ENCODE measurements at regions of chr17 and their contacts with region 1.

Region 1: DNA sequence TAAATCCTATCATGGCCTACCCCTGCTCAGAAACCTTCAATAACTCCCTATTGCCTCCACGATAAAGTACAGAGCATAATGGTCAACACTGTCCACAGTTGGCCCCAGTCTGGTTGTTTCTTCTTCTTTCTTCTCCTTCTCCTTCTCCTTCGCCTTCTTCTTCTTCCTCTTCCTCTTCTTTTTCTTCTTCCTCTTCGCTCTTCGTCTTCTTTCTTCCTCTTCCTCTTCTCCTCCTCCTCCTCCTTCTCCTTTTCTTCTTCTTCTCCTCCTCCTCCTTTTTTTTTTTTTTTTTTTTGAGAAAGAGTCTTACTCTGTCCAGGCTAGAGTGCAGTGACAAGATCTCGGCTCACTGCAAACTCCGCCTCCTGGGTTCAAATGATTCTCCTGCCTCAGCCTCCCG is 23.8 kb downstream of the MRM1 start:
- DNase-seq: no peak
- H3K27ac ChIP-seq: no peak overlapping the region
- CTCF ChIP-seq: no peak

Region 2: GRCh38 chr17:36545465-36546417 is 79.4 kb before region 1 on chr17:
- CTCF ChIA-PET with region 1: no interaction called
- POLR2A ChIA-PET with region 1: no interaction called
- DNase-seq: peak; percentile 97
- H3K27ac ChIP-seq: peak overlapping the region; percentile 98
- CTCF ChIP-seq: no peak

Region 3: GRCh38 chr17:36578671-36579070 is 46.5 kb before region 1 on chr17:
- CTCF ChIA-PET with region 1: no interaction called
- POLR2A ChIA-PET with region 1: no interaction called
- DNase-seq: no peak
- H3K27ac ChIP-seq: no peak overlapping the region
- CTCF ChIP-seq: no peak

Region 4: DNA sequence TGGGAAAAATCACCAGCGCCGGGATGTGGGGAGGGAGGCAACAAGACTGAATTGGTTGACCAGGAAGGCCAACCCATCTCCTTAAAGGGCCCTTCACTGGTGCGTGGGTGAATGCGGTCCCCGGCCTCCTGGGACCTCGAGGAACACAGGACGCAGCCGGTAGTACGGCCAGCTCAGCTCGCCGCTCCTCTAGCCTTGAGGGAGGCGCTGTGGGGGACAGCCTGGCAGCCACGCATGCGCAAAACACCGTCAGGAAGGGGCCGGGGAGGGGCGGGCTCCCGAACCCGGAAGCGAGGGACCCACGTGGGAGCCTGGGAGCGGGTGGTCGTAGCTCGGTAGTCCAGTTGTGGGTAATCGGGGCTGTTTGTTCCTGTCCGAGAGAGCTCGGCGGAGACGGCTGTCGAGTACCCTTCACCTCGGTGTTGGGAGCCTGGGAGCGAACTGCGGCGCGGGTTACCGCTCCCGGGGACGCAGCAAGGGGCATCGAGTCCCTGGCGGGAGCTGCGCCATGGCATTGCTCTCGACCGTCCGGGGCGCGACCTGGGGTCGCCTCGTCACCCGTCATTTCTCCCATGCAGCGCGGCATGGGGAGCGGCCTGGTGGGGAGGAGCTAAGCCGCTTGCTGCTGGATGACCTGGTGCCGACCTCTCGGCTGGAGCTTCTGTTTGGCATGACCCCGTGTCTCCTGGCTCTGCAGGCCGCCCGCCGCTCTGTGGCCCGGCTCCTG is 23.7 kb before region 1 on chr17 and contains the start of gene MRM1:
- CTCF ChIA-PET with region 1: interaction called, 15 read pairs
- POLR2A ChIA-PET with region 1: no interaction called
- DNase-seq: peak; percentile 93
- H3K27ac ChIP-seq: peak within 1 kb of the TSS; percentile 82
- CTCF ChIP-seq: no peak

Region 5: GRCh38 chr17:36682773-36683172 is 57.6 kb after region 1 on chr17:
- CTCF ChIA-PET with region 1: no interaction called
- POLR2A ChIA-PET with region 1: no interaction called
- DNase-seq: no peak
- H3K27ac ChIP-seq: no peak overlapping the region
- CTCF ChIP-seq: no peak

Region 6: GRCh38 chr17:36755586-36755985 is 130.4 kb after region 1 on chr17:
- CTCF ChIA-PET with region 1: no interaction called
- POLR2A ChIA-PET with region 1: no interaction called
- DNase-seq: no peak
- H3K27ac ChIP-seq: no peak overlapping the region
- CTCF ChIP-seq: no peak